ENCODE measurements at regions of chr11 and their contacts with region 1.

Region 1: DNA sequence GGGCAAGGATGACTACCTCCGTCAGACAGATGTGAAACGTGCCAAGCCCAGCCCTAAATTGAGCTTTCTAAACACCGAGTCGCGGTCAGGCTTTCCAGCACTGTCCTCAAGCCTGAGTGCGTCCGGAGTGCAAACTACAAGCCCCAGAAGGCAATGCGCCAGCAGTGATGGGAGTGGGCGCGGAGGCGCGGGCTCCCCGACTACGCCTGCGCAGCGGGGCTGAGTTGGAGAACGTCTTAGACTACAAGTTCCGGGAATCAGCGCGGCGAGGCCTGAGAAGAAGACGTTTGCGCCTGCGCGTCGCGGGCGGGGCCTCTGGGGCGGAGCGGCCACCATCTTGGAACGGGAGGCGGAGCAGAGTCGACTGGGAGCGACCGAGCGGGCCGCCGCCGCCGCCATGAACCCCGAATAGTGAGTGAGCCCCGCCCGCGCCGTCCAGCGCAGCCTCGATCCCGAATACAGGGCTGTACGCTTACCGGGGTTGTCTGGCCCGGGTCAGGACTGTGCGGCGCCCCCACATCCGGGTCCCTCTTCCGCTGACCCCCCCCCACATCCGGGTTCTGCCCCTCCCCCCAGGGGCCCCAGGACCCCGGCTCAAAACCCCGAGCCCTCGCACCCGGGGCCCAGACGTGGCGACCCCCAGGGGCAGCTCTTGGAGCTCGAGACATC is at the start of gene RAB1B:
- DNase-seq: peak; percentile 98 to 100
- H3K4me3 ChIP-seq: peak within 1 kb of the TSS; percentile 95
- H3K27ac ChIP-seq: peak within 1 kb of the TSS; percentile 57
- H3K4me1 ChIP-seq: peaks cover 8% of the 10 kb centered on the region
- H3K27me3 ChIP-seq: no peaks in the 10 kb centered on the region
- CTCF ChIP-seq: no peak
- total RNA-seq, gene RAB1B: 209 and 232 TPM in 2 replicates

Region 2: GRCh38 chr11:66081505-66081904 is 186.9 kb before region 1 on chr11:
- CTCF ChIA-PET with region 1: interaction called, 11 read pairs
- POLR2A ChIA-PET with region 1: no interaction called
- intact Hi-C with region 1: no loop called
- DNase-seq: peak; percentile 79 to 94
- H3K4me3 ChIP-seq: peak overlapping the region; percentile 42; the same call in 1 of the 2 replicates
- H3K27ac ChIP-seq: peak overlapping the region; percentile 57
- H3K4me1 ChIP-seq: peaks cover 42% of the 10 kb centered on the region
- H3K27me3 ChIP-seq: no peaks in the 10 kb centered on the region
- CTCF ChIP-seq: no peak

Region 3: GRCh38 chr11:66291706-66292549 is 23.5 kb after region 1 on chr11 and contains the start of gene TMEM151A:
- CTCF ChIA-PET with region 1: no interaction called
- POLR2A ChIA-PET with region 1: no interaction called
- intact Hi-C with region 1: no loop called
- DNase-seq: no peak
- H3K4me3 ChIP-seq: no peak within 1 kb of the TSS
- H3K27ac ChIP-seq: no peak within 1 kb of the TSS
- H3K4me1 ChIP-seq: peaks cover 19% of the 10 kb centered on the region
- H3K27me3 ChIP-seq: 0 out of 2 replicates have a peak, but pooled peaks cover 1% of the 10 kb centered on the region
- CTCF ChIP-seq: no peak
- total RNA-seq, gene TMEM151A: 0.15 and 0.22 TPM in 2 replicates

Region 4: GRCh38 chr11:66333896-66334604 is 65.6 kb after region 1 on chr11:
- CTCF ChIA-PET with region 1: no interaction called
- POLR2A ChIA-PET with region 1: no interaction called
- intact Hi-C with region 1: no loop called
- DNase-seq: no peak
- H3K4me3 ChIP-seq: no peak overlapping the region
- H3K27ac ChIP-seq: no peak overlapping the region
- H3K4me1 ChIP-seq: peaks cover 16% of the 10 kb centered on the region
- H3K27me3 ChIP-seq: no peaks in the 10 kb centered on the region
- CTCF ChIP-seq: no peak

Region 5: DNA sequence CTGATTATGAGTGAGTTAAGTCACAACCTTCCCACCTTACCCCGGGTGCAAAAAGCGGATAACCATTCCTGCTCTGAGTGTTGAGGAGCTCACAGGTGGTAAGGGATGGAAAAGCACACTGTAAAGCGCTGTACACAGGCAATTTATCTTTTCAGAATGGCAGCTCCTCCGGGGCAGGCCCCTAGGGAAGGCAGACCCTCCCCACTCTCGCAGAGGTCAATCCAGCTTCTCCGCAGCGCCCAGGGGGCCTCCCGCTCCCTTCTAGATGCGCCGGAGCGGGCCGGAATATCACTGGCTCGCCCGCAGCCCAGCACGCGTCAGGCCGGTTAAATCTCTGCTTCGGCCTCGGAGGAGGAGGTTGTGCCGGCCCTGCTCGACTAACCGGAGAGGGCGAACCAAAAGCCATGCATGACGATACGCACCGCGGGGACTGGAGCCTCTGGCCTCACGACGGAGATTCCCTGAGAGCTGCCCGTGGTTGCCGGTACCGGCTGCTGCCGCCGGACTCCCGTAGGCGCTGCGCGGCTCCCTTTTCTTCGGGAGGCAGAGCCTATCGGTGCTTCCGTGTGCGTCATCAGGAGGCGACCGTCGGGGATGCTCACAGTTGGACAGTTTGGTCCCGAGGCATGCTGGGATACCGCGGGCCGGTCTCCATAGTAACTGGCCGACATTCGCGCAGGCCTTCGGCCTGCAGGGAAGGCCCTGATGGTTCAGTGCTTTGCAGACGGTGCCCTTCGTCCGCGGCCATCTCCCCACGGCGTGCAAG is 76.3 kb after region 1 on chr11 and contains the start of gene BRMS1:
- CTCF ChIA-PET with region 1: interaction called, 7 read pairs
- POLR2A ChIA-PET with region 1: interaction called, 4 read pairs
- intact Hi-C with region 1: loop called (anchors 1 kb)
- DNase-seq: peak; percentile 94
- H3K4me3 ChIP-seq: peak within 1 kb of the TSS; percentile 100
- H3K27ac ChIP-seq: peak within 1 kb of the TSS; percentile 11; the same call in 1 of the 2 replicates
- H3K4me1 ChIP-seq: peaks cover 34% of the 10 kb centered on the region
- H3K27me3 ChIP-seq: no peaks in the 10 kb centered on the region
- CTCF ChIP-seq: no peak
- total RNA-seq, gene BRMS1: 43.2 and 54.3 TPM in 2 replicates

Measured in PC-9 (cell line).